Ascending aorta (tissue), 2 donors: ENCODE measurements at regions of chr12 and their contacts with region 1.

Region 1: GRCh38 chr12:106136263-106136662 is 2.5 kb downstream of the NUAK1 start:
- DNase-seq: peak in 1 of 2 donors; percentile 93
- H3K4me3 ChIP-seq: peak overlapping the region; percentile 87 to 95
- H3K27ac ChIP-seq: peak overlapping the region; percentile 98 to 99
- H3K4me1 ChIP-seq: peaks cover 5 to 43% of the 10 kb centered on the region in 2 donors
- H3K27me3 ChIP-seq: no peaks in the 10 kb centered on the region
- CTCF ChIP-seq: peak; percentile 76 to 86 (median 79)

Region 2: DNA sequence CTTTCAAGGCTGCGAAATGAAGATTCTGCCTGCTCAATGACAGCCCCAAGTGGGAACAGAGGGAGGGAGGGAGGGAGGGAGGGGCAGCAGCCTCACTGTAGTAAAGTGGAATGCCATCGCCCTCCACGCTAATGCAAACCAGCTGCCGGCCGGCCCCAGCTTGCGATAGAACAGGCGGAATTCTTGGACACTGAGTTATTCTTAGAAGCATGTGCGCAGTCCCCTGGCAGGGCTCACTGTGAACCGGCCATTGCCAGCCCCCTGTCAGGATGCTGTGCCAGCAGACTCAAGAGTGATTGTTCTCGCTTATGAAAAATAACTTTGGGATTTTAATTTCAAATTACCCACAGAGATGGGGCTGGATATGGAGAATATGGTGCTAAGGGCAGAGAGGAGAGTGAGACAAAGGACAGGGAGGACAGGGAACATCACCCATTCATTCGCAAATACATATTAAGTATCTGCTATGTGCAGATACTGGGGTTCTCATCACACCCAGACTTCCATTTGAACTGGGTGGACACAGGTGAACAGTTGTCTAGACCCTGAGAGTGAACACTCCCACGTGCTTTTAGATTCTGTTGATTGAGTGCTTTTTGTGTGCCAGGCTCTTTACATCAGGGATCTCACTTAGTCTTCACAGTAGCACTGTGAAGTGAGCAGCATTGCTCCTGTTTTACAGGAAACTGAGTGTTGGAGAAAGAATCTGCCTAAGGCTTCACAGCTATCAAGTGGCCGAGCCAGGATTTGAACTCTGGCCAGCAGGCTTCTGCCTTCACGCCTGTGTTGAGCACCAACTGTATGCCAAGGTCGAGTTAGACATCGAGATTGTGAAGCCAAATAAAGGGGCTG is 612.9 kb before region 1 on chr12:
- intact Hi-C with region 1: loop called (anchors 10 kb)
- DNase-seq: peak; percentile 66 to 93
- H3K4me3 ChIP-seq: no peak overlapping the region
- H3K27ac ChIP-seq: peak overlapping the region; percentile 52 to 61
- H3K4me1 ChIP-seq: peaks cover 0 to 20% of the 10 kb centered on the region in 2 donors
- H3K27me3 ChIP-seq: no peaks in the 10 kb centered on the region
- CTCF ChIP-seq: no peak

Region 3: GRCh38 chr12:105705765-105706164 is 430.5 kb before region 1 on chr12:
- intact Hi-C with region 1: loop called (anchors 1 kb)
- DNase-seq: peak in 1 of 2 donors; percentile 82
- H3K4me3 ChIP-seq: no peak overlapping the region
- H3K27ac ChIP-seq: peak overlapping the region; percentile 74 to 83
- H3K4me1 ChIP-seq: peaks cover 0 to 18% of the 10 kb centered on the region in 2 donors
- H3K27me3 ChIP-seq: no peaks in the 10 kb centered on the region
- CTCF ChIP-seq: peak; percentile 57 to 90 (median 84)

Region 4: GRCh38 chr12:105765053-105766014 is 370.9 kb before region 1 on chr12:
- intact Hi-C with region 1: no loop called
- DNase-seq: no peak
- H3K4me3 ChIP-seq: no peak overlapping the region
- H3K27ac ChIP-seq: no peak overlapping the region
- H3K4me1 ChIP-seq: no peaks in the 10 kb centered on the region
- H3K27me3 ChIP-seq: no peaks in the 10 kb centered on the region
- CTCF ChIP-seq: no peak

Region 5: DNA sequence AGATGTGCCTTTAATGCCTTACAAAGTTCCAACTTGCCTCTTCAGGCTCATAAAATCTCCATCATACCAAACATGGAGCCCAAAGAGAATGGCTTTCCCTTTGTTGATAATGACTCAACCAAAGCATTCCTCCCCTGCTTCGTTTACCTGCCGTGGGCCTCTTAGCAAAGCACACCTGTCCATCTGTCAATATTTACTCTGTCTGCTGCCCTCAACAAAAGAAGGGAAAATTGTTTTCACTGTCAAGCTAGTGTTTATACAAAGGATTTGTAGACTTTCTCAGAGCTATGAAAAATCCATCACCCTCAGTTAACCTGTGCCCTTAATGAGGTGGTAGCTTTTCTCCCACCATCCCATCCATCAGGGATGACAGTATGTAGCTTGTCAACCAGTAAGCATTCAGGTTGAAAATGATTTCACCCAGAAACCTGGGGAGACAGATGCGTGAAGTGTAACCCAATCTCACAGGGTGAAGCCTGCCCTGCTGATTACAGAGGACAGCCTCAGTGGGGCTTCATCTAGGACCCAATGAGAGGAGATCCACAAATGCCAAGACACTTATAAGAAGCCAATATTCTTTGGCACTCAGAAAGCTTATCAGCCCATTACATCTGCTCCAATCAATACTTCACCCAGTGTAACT is 275.6 kb before region 1 on chr12:
- intact Hi-C with region 1: loop called (anchors 5 kb)
- DNase-seq: no peak
- H3K4me3 ChIP-seq: no peak overlapping the region
- H3K27ac ChIP-seq: no peak overlapping the region
- H3K4me1 ChIP-seq: peaks cover 5 to 7% of the 10 kb centered on the region in 2 donors
- H3K27me3 ChIP-seq: no peaks in the 10 kb centered on the region
- CTCF ChIP-seq: no peak

Region 6: GRCh38 chr12:105922670-105923102 is 213.6 kb before region 1 on chr12:
- intact Hi-C with region 1: no loop called
- DNase-seq: no peak
- H3K4me3 ChIP-seq: no peak overlapping the region
- H3K27ac ChIP-seq: peak overlapping the region in 1 of 2 donors; percentile 13
- H3K4me1 ChIP-seq: peaks cover 0 to 8% of the 10 kb centered on the region in 2 donors
- H3K27me3 ChIP-seq: no peaks in the 10 kb centered on the region
- CTCF ChIP-seq: no peak

Region 7: DNA sequence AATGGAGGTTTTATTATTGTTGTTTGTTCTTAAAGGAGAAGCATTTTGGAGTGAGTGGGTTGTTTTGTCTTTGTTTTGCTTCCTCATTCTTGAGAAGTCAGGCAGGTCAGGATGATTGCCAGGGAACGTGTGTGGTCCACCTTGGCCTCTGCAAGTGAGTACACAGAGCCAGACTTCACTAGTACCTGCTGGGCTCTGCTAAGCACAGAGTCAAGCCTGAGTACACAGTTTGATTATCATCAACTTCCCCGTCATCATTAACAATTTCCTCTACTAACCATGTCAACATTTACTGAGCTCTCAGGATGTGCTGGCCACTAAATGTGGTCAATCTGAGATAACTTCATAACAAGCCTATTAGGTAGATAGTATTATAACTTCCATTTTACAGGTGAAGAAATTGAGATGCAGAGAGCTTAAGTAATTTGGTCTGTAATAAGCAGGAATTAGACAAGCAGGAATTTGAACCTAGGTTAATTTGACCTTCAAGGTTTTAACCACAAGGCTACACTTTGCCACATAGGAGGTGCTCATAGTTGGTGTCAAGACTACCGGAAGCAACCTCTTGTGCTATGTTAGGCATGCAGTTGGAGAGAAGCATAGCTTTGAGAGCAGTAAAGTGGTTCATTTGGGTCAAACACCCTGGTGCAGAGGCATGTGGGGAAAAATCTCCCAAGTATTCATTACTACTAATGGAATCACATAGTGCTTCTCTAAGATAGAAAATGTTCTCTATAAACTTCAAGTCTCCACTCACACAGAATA is 175.8 kb before region 1 on chr12:
- intact Hi-C with region 1: loop called (anchors 5 kb)
- DNase-seq: no peak
- H3K4me3 ChIP-seq: no peak overlapping the region
- H3K27ac ChIP-seq: peak overlapping the region in 1 of 2 donors; percentile 6
- H3K4me1 ChIP-seq: peaks cover 0 to 11% of the 10 kb centered on the region in 2 donors
- H3K27me3 ChIP-seq: no peaks in the 10 kb centered on the region
- CTCF ChIP-seq: no peak

Region 8: DNA sequence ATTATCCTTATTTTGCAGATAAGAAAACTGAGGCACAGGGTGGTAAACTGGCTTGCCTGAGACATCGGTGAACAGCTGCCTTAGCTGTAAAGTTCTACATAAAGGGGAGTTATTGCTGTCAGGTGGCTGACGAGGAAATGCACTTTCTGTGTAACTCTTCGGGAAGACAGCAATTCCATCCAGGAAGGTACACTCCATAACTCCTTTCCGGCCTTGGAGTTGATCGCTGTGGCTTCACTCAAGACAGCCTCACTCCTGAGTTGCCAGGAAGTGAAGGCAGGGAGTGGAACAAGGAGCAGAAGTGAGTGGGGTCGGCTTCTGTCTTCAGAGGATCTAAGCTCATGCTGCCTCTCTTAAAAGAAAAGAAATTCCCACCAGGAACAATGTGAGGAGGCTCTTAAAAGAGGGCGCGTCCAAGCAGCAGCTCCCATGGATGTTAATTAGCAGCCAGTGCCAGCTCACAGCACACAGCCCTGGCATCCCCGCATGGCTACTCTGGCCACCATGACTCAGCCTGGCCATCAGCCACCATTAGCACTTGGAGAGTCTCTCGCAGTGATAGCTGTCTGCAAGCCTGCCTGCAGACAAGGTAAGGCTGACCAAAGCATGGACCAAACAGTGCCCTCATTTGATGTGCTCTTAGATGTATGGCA is 57.8 kb before region 1 on chr12:
- intact Hi-C with region 1: loop called (anchors 5 kb)
- DNase-seq: peak in 1 of 2 donors; percentile 92
- H3K4me3 ChIP-seq: no peak overlapping the region
- H3K27ac ChIP-seq: peak overlapping the region; percentile 88 to 92
- H3K4me1 ChIP-seq: peaks cover 8 to 69% of the 10 kb centered on the region in 2 donors
- H3K27me3 ChIP-seq: no peaks in the 10 kb centered on the region
- CTCF ChIP-seq: no peak

Region 9: DNA sequence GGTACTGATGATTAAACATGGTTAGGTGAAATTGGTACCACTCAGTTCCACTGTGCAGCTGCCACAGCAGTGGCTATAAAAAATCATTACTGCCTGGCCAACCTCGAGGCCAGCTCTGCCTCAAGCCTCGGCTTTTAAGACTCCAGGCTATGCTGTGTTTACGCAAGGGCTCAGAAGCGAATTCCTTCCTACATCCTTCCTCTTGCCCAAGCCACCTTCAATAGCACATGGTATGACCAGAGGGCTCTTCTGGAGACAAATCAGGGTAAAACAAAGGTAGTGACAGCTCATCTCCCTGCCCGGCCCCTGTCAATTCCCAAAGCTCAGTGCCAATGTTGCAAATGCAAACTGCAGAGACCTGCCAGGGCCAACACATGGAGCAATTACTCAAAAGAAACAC is 29.4 kb before region 1 on chr12:
- intact Hi-C with region 1: loop called (anchors 2 kb)
- DNase-seq: no peak
- H3K4me3 ChIP-seq: no peak overlapping the region
- H3K27ac ChIP-seq: peak overlapping the region; percentile 91
- H3K4me1 ChIP-seq: peaks cover 16 to 71% of the 10 kb centered on the region in 2 donors
- H3K27me3 ChIP-seq: no peaks in the 10 kb centered on the region
- CTCF ChIP-seq: no peak

Region 10: DNA sequence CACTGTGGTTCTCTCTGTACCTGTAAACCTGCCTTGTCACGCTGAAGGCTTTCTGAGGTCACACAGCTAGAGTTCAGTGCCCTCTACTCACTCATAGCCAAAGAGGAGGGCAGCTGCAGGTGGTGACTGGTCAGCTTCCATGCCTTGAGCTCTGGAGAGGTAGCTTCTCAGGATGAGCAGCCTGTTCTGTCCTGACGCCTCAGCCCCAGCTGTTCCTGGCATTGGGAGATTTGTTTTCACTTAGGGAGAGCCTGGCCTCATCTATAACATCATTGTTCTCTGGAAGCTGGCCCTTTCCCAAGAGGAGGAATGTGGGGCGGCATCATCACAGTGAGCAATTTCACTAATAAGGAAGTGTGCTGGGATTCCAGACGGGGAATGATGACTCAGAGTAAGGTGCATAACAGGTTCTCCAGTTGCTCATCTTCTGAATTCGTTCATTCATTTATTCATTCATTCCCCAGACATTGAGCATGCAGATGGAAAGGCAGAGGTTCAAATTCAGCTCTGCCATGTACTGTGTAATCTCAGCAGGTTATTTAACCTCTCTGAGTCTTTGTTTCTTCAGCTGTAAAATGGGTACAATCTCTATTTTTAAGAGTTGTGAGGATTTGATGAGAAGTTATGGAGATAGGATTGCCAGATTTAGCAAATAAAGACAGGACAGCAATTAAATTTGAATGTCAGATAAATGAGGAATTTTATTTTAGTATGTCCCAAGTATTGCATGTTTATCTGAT is 1212.9 kb after region 1 on chr12:
- intact Hi-C with region 1: no loop called
- DNase-seq: no peak
- H3K4me3 ChIP-seq: no peak overlapping the region
- H3K27ac ChIP-seq: no peak overlapping the region
- H3K4me1 ChIP-seq: no peaks in the 10 kb centered on the region
- H3K27me3 ChIP-seq: no peaks in the 10 kb centered on the region
- CTCF ChIP-seq: no peak